Breast epithelium (tissue), 4 donors: ENCODE measurements at regions of chr13 and their contacts with region 1.

Region 1: GRCh38 chr13:75196147-75196837 is 285.7 kb downstream of the TBC1D4 start:
- DNase-seq: no peak
- H3K4me3 ChIP-seq: no peak overlapping the region
- H3K27ac ChIP-seq: no peak overlapping the region
- H3K4me1 ChIP-seq: no peaks in the 10 kb centered on the region
- H3K27me3 ChIP-seq: no peaks in the 10 kb centered on the region
- CTCF ChIP-seq: no peak
- POLR2A ChIP-seq: no peak

Region 2: GRCh38 chr13:75129331-75129730 is 67.0 kb before region 1 on chr13:
- intact Hi-C with region 1: loop called (anchors 2 kb)
- DNase-seq: no peak
- H3K4me3 ChIP-seq: no peak overlapping the region
- H3K27ac ChIP-seq: no peak overlapping the region
- H3K4me1 ChIP-seq: no peaks in the 10 kb centered on the region
- H3K27me3 ChIP-seq: no peaks in the 10 kb centered on the region
- CTCF ChIP-seq: no peak
- POLR2A ChIP-seq: no peak

Region 3: DNA sequence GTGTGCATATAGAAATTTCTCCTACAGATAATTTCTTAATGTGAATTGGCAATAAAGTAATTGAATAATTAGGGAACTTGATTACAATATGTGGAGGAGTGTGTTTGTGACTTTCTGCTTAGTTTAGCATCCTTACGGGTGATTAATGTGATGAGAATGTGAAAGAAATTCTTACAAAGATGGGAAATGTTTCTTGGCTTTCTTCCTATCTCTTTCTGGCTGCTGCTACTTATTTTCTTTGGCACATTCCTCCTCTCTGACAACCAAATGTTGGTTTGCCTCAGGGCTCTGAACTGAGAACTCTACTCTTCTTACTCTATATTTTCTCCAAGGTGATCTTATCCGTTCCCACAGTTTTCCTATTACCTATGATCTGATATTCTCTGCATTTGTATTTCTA is 14.4 kb before region 1 on chr13:
- intact Hi-C with region 1: no loop called
- DNase-seq: no peak
- H3K4me3 ChIP-seq: no peak overlapping the region
- H3K27ac ChIP-seq: no peak overlapping the region
- H3K4me1 ChIP-seq: no peaks in the 10 kb centered on the region
- H3K27me3 ChIP-seq: no peaks in the 10 kb centered on the region
- CTCF ChIP-seq: no peak
- POLR2A ChIP-seq: no peak